Naive thymus-derived CD4-positive, alpha-beta T cell (primary cell): ENCODE measurements at regions of chr17 and their contacts with region 1.

Region 1: DNA sequence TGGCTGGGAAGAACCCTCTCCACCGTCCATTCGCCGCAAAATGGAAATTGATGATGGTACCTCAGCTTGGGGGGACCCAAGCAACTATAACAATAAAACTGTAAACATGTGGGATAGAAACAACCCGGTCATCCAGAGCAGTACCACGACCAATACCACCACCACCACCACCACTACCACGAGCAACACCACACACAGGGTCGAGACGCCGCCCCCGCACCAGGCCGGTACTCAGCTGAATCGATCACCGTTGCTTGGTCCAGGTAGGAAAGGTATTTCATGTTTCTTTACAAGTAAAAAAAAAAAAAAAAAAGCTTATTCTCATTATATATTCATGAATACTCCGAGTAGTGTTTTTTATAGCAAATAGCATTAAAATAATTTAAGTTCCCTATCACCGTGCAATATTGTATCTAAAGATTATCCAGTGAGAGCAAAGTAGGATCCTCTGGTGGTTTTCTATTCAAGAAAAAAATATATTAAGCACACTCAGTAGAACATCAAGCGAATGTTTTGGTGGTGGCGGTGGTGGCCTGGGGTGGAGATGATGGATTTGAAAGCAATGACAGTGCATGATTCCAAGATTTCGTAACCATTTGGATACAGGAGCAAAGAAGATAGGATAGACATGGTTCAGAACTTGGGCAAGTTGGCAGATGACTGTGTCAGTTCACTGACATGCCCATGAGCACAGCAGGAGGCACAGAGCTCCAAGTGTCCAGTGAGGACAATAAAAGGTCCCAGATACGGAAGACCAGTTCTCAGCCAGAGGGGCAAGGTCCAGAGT is 77.2 kb downstream of the TMC6 start:
- DNase-seq: no peak
- ATAC-seq: no peak
- H3K4me3 ChIP-seq: no peak overlapping the region
- H3K4me3 Mint-ChIP-seq: no peak overlapping the region
- H3K27ac ChIP-seq: no peak overlapping the region
- H3K27ac Mint-ChIP-seq: peak overlapping the region in 5 of 9 donors; percentile 4 to 73 (median 18)
- H3K4me1 ChIP-seq: no peaks in the 10 kb centered on the region
- H3K4me1 Mint-ChIP-seq: peaks cover 10 to 42% (median 25%) of the 10 kb centered on the region in 7 donors
- H3K27me3 ChIP-seq: no peaks in the 10 kb centered on the region
- H3K27me3 Mint-ChIP-seq: no peaks in the 10 kb centered on the region

Region 2: GRCh38 chr17:78186692-78187595 is 135.6 kb after region 1 on chr17 and contains the starts of genes AFMID and TK1:
- CTCF ChIA-PET with region 1: interaction called, 11 read pairs
- POLR2A ChIA-PET with region 1: no interaction called
- intact Hi-C with region 1: no loop called
- DNase-seq: peak; percentile 33 to 96 (median 56)
- ATAC-seq: peak; percentile 95
- H3K4me3 ChIP-seq: peak within 1 kb of the TSS; percentile 62
- H3K4me3 Mint-ChIP-seq: peak within 1 kb of the TSS; percentile 75 to 91 (median 85)
- H3K27ac ChIP-seq: no peak within 1 kb of the TSS
- H3K27ac Mint-ChIP-seq: peak within 1 kb of the TSS in 8 of 9 donors; percentile 14 to 81 (median 63)
- H3K4me1 ChIP-seq: peaks cover 0 to 5% of the 10 kb centered on the region in 2 donors
- H3K4me1 Mint-ChIP-seq: peaks cover 0 to 39% (median 13%) of the 10 kb centered on the region in 7 donors
- H3K27me3 ChIP-seq: no peaks in the 10 kb centered on the region
- H3K27me3 Mint-ChIP-seq: no peaks in the 10 kb centered on the region
- total RNA-seq, gene AFMID: 1.2 to 19.2 (median 3.0) TPM
- total RNA-seq, gene TK1: 0.29 to 57.7 (median 1.0) TPM in 3 of 5 experiments, not detected in the others